Tibial artery (tissue), 4 donors: ENCODE measurements at regions of chr14 and their contacts with region 1.

Region 1: GRCh38 chr14:76956316-76957090 is 72.0 kb downstream of the IRF2BPL start:
- DNase-seq: peak; percentile 91 to 97
- H3K4me3 ChIP-seq: peak overlapping the region; percentile 44 to 53
- H3K27ac ChIP-seq: peak overlapping the region; percentile 92 to 94
- H3K4me1 ChIP-seq: peaks cover 6 to 95% (median 84%) of the 10 kb centered on the region in 4 donors
- H3K27me3 ChIP-seq: no peaks in the 10 kb centered on the region
- CTCF ChIP-seq: peak; percentile 21 to 38

Region 2: DNA sequence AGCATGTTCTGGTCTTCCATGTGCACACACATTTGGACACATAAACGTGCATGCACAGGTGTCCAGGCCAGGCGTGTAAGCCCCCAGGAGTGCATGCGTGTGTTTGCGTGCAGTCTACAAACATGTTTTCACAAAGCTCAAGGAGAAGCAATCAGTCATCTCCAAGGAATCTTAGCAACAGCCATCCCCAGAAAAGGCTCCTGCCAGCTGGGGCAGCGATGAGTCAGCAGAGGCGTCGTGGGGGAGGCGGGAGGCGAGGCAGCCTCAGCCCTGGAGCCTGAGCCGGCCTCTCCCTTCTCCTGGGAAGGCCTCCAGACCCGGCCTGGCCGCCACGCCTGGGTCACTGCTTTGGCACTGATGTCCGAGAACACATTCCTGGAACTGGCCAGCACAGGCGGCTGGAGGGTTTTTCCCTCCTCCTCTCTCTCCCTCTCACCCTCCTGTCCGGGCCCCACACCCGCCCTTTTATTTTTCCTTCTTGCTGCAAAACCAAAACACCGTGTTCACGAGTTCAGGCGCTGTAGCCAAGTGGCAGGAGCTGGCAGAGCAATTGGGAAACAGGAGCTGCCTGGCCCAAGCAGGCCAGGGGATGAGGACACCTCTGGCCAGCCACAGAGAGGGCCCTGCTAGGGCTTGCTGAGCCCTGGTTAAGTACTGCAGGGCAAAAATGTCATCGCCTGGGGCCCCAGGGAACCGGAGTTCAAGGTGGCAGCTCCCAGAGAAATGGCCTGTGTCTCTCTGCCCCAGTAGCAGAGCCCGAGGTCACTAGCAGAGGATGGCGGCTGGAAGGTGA is 37.6 kb before region 1 on chr14:
- intact Hi-C with region 1: loop called (anchors 1 kb)
- DNase-seq: peak; percentile 96 to 100
- H3K4me3 ChIP-seq: peak overlapping the region in 1 of 2 donors; percentile 19
- H3K27ac ChIP-seq: peak overlapping the region; percentile 84 to 88
- H3K4me1 ChIP-seq: peaks cover 10 to 62% (median 50%) of the 10 kb centered on the region in 4 donors
- H3K27me3 ChIP-seq: no peaks in the 10 kb centered on the region
- CTCF ChIP-seq: peak; percentile 26 to 27

Region 3: DNA sequence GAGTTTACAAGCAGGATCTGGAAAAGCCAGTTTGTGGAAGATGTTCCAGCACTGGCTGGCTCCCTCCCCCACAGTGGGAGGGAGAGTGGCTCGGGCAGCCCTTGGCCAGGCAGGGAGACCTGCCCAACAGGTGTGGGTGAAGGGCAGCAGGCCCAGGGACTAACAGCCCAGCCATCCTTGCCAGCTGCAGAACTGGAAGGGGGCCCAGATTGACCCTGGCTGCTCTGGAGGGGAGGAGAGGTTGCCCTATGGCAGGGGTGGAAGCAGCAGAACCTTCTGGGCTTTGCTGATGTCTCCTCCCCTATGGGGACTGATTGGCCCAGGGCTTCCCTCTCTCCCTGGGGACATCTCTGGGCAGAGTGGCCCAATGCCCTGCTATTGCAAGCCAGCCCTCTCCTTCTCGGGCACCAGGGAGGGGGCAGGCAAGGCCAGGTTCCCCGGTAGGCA is 51.5 kb after region 1 on chr14:
- intact Hi-C with region 1: loop called (anchors 5 kb)
- DNase-seq: peak; percentile 75 to 96
- H3K4me3 ChIP-seq: no peak overlapping the region
- H3K27ac ChIP-seq: peak overlapping the region; percentile 79 to 81
- H3K4me1 ChIP-seq: peaks cover 0 to 72% (median 51%) of the 10 kb centered on the region in 4 donors
- H3K27me3 ChIP-seq: no peaks in the 10 kb centered on the region
- CTCF ChIP-seq: no peak

Region 4: DNA sequence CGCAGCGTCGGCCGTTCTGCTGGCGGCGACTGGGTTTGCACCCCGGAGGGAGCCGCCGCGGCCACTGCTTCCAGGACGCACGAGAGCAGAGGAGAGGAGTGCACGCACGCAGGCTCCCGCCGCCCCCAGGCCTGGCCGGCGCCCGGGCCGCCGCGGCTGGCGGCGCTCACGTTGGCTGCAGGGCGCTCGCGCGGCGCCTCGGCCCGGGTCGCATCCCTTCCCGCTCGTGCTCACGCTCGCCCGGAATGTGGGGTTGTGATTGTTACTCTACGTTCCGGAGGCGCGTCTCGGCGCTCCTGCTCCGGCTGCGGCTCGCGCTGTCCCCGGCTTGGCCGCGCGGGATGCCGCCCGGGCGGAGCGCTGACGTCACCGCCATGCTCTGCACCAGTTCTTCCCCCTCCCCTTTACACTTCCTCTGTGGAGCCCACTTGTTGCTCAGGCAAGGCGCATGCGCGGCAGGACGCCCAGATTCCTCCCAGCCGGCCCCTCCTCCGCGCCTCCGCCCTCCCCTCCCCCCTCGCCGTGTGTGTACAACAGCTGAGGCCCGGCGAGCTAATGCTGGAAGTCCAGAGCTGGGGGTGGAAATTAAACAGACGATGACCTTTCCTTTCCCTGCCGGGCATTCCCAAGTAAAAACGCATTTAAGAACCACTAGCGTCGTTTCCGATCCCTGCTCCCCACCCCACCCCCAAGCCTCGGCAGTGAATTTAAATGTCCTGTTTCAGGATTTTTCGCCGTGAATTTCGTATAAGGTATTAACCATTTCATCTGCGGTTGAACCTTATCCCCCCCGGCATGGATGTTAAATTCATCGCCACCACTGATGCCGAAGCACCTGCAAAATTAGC is 72.1 kb after region 1 on chr14 and contains the start of gene IRF2BPL:
- intact Hi-C with region 1: loop called (anchors 5 kb)
- DNase-seq: peak; percentile 99
- H3K4me3 ChIP-seq: peak within 1 kb of the TSS; percentile 82 to 94
- H3K27ac ChIP-seq: peak within 1 kb of the TSS; percentile 97 to 99
- H3K4me1 ChIP-seq: peaks cover 0 to 64% (median 53%) of the 10 kb centered on the region in 4 donors
- H3K27me3 ChIP-seq: no peaks in the 10 kb centered on the region
- CTCF ChIP-seq: no peak

Region 5: DNA sequence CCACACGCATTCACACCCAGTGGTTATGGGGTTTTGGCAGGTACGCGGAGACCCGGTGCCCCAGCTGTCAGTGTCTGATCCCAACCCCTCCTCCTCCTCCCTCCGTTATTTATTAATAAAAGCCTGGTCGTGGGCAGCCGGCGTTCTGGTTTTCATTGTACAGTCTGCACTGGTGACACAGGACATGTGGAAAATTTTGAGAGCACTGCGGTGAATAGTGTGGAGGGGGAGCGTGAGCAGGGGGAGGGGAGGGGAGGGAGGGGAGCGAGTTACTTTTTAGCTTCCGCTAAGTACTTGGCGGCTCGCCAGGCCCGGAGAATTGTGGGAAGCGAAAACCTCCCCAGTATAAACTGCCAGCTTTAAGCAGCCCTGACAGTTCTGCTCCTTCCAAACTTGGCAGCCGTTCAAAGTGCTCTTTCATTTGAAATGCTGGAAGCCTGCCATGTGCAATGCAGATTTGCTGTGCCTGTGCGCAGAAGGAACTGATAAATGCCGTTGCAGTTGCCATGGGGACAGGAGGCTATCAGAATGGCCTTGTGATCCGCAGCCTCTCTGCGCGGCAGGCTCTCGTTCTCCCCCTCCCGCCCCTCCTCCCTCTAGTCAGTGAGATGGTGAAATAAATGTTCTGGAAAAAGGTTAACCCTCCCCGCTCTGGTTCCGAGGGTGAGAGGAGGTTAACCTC is 83.7 kb after region 1 on chr14:
- intact Hi-C with region 1: loop called (anchors 5 kb)
- DNase-seq: peak; percentile 96 to 99
- H3K4me3 ChIP-seq: peak overlapping the region; percentile 35 to 43
- H3K27ac ChIP-seq: peak overlapping the region; percentile 78 to 88
- H3K4me1 ChIP-seq: peaks cover 10 to 82% (median 77%) of the 10 kb centered on the region in 4 donors
- H3K27me3 ChIP-seq: no peaks in the 10 kb centered on the region
- CTCF ChIP-seq: no peak

Region 6: DNA sequence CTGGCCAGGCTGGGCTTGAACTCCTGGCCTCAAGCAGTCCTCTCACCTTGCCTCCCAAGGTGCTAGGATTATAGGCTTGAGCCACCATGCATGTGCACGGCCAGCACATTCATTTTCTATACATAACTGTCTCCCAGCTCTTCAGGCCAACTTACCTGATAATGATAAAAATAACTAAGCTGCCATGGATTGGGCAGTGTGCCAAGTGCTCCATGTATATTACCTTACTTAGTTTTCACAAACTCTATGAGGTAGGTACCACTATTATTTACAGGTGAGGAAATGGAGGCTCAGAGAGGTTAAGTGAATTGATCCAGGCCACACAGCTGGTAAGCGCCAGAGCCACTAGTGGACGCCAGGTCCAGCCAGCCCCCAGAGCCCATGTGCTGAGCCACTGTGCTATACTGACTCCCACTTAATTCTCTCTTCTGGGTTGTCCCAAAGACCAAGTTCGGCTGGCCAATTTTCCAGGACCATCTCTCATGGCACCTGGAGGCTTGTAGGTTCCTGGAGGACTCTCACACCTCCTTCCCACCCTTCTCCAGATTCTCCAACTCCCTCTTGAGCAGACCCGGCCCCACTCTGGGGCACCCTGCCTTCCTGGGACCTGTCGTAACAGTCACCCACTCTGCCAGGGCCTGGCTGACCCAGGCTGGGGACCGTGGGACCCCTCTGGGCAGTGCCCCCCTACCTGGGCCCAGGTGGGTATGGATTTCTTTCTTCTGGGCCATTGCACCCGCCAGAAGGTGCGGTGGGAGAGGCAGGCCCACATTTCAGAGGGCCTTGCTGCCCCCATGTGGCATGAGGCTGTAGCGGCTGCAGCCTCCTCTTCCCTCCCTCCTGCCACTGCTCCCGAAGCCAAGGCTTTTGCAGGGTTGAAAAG is 111.4 kb after region 1 on chr14:
- intact Hi-C with region 1: no loop called
- DNase-seq: peak; percentile 56 to 80
- H3K4me3 ChIP-seq: no peak overlapping the region
- H3K27ac ChIP-seq: no peak overlapping the region
- H3K4me1 ChIP-seq: peaks cover 0 to 18% (median 6%) of the 10 kb centered on the region in 4 donors
- H3K27me3 ChIP-seq: no peaks in the 10 kb centered on the region
- CTCF ChIP-seq: peak; percentile 86 to 91